ENCODE measurements at regions of chr6 and their contacts with region 1.

Region 1: DNA sequence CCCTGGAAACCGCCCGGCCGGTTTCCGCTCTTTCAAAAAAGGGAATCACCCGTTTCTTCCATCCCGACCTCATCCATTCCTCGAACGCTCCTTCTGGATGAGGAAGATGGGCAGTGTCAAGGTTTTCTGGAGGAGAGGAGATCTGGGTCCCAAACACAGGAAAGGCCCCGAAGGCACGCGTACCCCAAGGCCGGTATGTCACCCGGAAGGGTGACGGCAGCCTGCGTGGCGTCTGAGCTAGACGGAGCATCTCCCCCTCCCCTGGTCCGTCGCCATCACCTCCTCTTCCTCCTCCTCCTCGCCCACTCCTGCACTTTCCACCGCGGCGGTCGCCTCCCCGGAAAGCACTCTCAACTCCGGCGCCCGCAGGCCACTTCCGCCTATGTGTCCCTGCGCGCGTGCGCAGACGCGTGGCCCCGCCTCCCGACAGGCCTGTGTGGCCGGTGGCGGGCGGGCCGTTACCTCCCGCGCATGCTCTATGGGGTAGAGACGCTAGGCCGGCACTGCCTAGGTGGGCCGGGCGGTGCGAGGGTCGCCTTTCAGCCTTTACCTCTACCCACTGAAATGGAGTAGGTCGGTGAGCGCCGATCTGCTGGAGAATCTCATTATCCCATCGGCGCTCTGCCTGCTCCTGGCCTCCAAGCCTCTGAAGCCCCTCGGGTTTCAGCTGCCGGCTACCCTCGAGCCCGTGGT is at the start of gene SLC35B3:
- DNase-seq: peak; percentile 95 to 99 (median 98)
- ATAC-seq: peak; percentile 95
- H3K4me3 ChIP-seq: peak within 1 kb of the TSS; percentile 95
- H3K4me3 Mint-ChIP-seq: peak within 1 kb of the TSS; percentile 96
- H3K27ac ChIP-seq: peak within 1 kb of the TSS; percentile 90 to 94
- H3K27ac Mint-ChIP-seq: peak within 1 kb of the TSS; percentile 97
- H3K4me1 ChIP-seq: peaks cover 8% of the 10 kb centered on the region
- H3K4me1 Mint-ChIP-seq: peaks cover 58% of the 10 kb centered on the region
- H3K27me3 ChIP-seq: no peaks in the 10 kb centered on the region
- H3K27me3 Mint-ChIP-seq: no peaks in the 10 kb centered on the region
- CTCF ChIP-seq: no peak
- total RNA-seq, gene SLC35B3: 2.4 TPM

Region 2: GRCh38 chr6:7312616-7313504 is 1122.4 kb before region 1 on chr6 and contains the start of gene SSR1:
- CTCF ChIA-PET with region 1: no interaction called
- POLR2A ChIA-PET with region 1: no interaction called
- intact Hi-C with region 1: loop called in 1 of 2 experiments (anchors 5 kb)
- DNase-seq: peak; percentile 77 to 96 (median 90)
- ATAC-seq: peak; percentile 95
- H3K4me3 ChIP-seq: peak within 1 kb of the TSS; percentile 94
- H3K4me3 Mint-ChIP-seq: peak within 1 kb of the TSS; percentile 95
- H3K27ac ChIP-seq: peak within 1 kb of the TSS; percentile 74 to 75
- H3K27ac Mint-ChIP-seq: peak within 1 kb of the TSS; percentile 86
- H3K4me1 ChIP-seq: peaks cover 20% of the 10 kb centered on the region
- H3K4me1 Mint-ChIP-seq: peaks cover 53% of the 10 kb centered on the region
- H3K27me3 ChIP-seq: no peaks in the 10 kb centered on the region
- H3K27me3 Mint-ChIP-seq: no peaks in the 10 kb centered on the region
- CTCF ChIP-seq: no peak
- total RNA-seq, gene SSR1: 49.6 to 55.1 TPM

Region 3: GRCh38 chr6:7389451-7390225 is 1045.7 kb before region 1 on chr6 and contains the starts of genes CAGE1 and RIOK1:
- CTCF ChIA-PET with region 1: no interaction called
- POLR2A ChIA-PET with region 1: no interaction called
- intact Hi-C with region 1: loop called in 1 of 2 experiments (anchors 10 kb)
- DNase-seq: peak; percentile 89 to 97 (median 92)
- ATAC-seq: peak; percentile 88
- H3K4me3 ChIP-seq: peak within 1 kb of the TSS; percentile 80
- H3K4me3 Mint-ChIP-seq: peak within 1 kb of the TSS; percentile 93
- H3K27ac ChIP-seq: peak within 1 kb of the TSS; percentile 98 to 99
- H3K27ac Mint-ChIP-seq: peak within 1 kb of the TSS; percentile 98
- H3K4me1 ChIP-seq: peaks cover 28% of the 10 kb centered on the region
- H3K4me1 Mint-ChIP-seq: peaks cover 43% of the 10 kb centered on the region
- H3K27me3 ChIP-seq: no peaks in the 10 kb centered on the region
- H3K27me3 Mint-ChIP-seq: no peaks in the 10 kb centered on the region
- CTCF ChIP-seq: no peak
- total RNA-seq, gene CAGE1: 0.38 to 0.39 TPM
- total RNA-seq, gene RIOK1: 25.5 to 28.1 TPM

Region 4: GRCh38 chr6:7589949-7590917 is 845.1 kb before region 1 on chr6 and contains the start of gene SNRNP48:
- CTCF ChIA-PET with region 1: no interaction called
- POLR2A ChIA-PET with region 1: no interaction called
- intact Hi-C with region 1: loop called in 1 of 2 experiments (anchors 10 kb)
- DNase-seq: peak; percentile 79 to 94 (median 88)
- ATAC-seq: peak; percentile 98
- H3K4me3 ChIP-seq: peak within 1 kb of the TSS; percentile 96
- H3K4me3 Mint-ChIP-seq: peak within 1 kb of the TSS; percentile 100
- H3K27ac ChIP-seq: peak within 1 kb of the TSS; percentile 38 to 45
- H3K27ac Mint-ChIP-seq: peak within 1 kb of the TSS; percentile 91
- H3K4me1 ChIP-seq: peaks cover 15% of the 10 kb centered on the region
- H3K4me1 Mint-ChIP-seq: peaks cover 48% of the 10 kb centered on the region
- H3K27me3 ChIP-seq: no peaks in the 10 kb centered on the region
- H3K27me3 Mint-ChIP-seq: no peaks in the 10 kb centered on the region
- CTCF ChIP-seq: no peak
- total RNA-seq, gene SNRNP48: 12.1 to 13.4 TPM

Region 5: DNA sequence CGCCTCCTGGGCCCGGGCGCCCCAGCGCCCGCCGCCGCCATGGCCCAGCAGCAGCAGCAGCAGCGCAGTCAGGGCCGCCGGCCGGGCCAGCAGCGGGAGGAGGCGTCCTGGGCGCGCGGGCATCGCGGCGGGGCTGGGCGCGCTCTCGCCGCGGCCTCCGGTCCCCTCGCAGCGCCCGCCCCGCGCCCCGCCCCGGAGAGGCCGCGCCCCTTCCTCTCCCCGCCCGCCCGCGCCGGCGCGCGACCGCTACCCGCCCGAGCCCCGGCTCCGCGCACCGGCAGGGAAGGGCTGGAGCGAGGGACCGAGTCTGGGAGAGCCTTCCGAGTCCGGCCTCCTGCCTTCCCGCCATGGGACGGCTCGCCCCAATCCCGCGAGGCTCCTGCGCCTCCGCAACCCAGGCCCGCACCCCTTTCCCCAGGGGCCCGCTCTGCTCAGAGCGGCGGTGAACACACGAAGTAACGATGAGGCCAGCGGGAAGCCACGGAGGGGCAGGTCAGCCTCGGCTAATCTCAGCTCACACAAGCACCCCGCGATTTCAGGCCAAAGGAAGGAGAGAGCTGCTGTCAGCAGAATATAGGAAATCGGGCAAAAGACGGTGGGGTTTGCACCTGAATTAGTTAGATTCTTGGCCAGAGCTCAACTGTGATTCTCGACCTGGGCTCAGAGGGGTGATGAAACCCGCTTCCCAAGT is 524.5 kb before region 1 on chr6 and contains the start of gene TXNDC5:
- CTCF ChIA-PET with region 1: no interaction called
- POLR2A ChIA-PET with region 1: no interaction called
- intact Hi-C with region 1: loop called in 1 of 2 experiments (anchors 5 kb)
- DNase-seq: peak; percentile 32 to 82 (median 66)
- ATAC-seq: peak; percentile 85
- H3K4me3 ChIP-seq: peak within 1 kb of the TSS; percentile 77
- H3K4me3 Mint-ChIP-seq: peak within 1 kb of the TSS; percentile 84
- H3K27ac ChIP-seq: no peak within 1 kb of the TSS
- H3K27ac Mint-ChIP-seq: no peak within 1 kb of the TSS
- H3K4me1 ChIP-seq: peaks cover 16% of the 10 kb centered on the region
- H3K4me1 Mint-ChIP-seq: no peaks in the 10 kb centered on the region
- H3K27me3 ChIP-seq: peaks cover 0 to 2% of the 10 kb centered on the region in 2 experiments
- H3K27me3 Mint-ChIP-seq: no peaks in the 10 kb centered on the region
- CTCF ChIP-seq: no peak
- total RNA-seq, gene TXNDC5: 4.2 to 7.8 TPM

Region 6: DNA sequence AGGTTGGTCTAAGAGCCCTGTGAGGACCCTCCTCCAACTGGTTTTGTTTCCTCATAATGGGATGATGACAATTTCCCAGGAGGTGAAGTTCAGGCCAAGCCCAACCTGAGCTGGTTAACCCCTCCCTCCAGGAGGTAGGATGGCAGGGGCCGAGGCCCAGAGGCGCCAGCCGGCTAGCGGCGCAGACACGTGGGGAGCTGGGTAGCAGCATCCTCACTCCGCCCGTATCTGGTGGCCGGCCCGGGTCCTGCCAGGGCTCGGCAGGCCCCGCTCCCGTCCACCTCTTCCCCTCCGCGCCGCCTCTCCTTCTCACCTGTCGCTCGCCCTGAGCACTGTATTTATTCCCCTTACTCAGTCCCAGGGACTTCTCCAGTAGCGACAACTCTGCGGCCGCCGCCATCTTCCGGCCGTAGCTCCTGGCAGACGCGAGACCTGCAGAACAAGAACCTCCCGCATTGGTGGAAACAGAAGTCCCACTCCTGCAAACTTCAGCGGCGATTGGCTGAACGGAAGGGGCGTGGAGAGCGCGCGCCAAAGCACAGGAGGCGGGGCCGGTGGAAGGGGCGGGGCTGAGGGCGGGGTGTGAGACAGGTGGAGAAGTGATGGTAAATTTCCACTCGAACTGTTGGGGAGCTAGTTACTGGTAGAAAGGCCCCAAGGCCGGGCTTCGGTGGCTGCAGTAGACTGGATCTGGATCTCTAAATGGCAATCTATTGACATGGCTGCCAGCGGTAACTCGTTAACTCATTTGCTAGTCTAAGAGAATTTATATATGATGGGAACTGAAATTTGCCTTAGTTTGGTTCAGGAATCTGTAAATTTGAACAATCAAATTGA is 333.0 kb before region 1 on chr6 and contains the start of gene EEF1E1:
- CTCF ChIA-PET with region 1: no interaction called
- POLR2A ChIA-PET with region 1: interaction called, 10 read pairs
- intact Hi-C with region 1: loop called in 1 of 2 experiments (anchors 10 kb)
- DNase-seq: peak; percentile 93 to 99 (median 97)
- ATAC-seq: peak; percentile 97
- H3K4me3 ChIP-seq: peak within 1 kb of the TSS; percentile 89
- H3K4me3 Mint-ChIP-seq: peak within 1 kb of the TSS; percentile 96
- H3K27ac ChIP-seq: peak within 1 kb of the TSS; percentile 69 to 73
- H3K27ac Mint-ChIP-seq: peak within 1 kb of the TSS; percentile 81
- H3K4me1 ChIP-seq: peaks cover 20% of the 10 kb centered on the region
- H3K4me1 Mint-ChIP-seq: peaks cover 31% of the 10 kb centered on the region
- H3K27me3 ChIP-seq: no peaks in the 10 kb centered on the region
- H3K27me3 Mint-ChIP-seq: peaks cover 25% of the 10 kb centered on the region
- CTCF ChIP-seq: no peak
- total RNA-seq, gene EEF1E1: 11.2 to 14.7 TPM

Region 7: DNA sequence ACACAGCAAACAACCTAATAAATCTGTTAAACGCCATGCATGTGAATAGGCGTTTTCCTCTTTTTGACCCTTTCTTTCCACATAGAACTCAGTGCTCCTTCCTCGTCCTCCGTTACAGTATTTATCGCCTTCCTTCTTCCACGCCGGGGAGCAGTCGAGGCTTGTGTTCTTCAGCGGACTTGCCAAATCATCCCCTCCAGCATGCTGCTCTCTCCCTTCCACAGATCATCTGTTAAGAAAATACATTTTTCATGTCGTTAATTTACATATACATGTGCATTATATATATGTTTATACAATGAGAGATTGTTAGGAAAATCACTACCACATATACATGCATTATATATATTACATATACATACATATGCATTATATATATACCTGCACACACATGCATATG is 92.9 kb before region 1 on chr6:
- CTCF ChIA-PET with region 1: no interaction called
- POLR2A ChIA-PET with region 1: no interaction called
- intact Hi-C with region 1: no loop called
- DNase-seq: no peak
- ATAC-seq: no peak
- H3K4me3 ChIP-seq: no peak overlapping the region
- H3K4me3 Mint-ChIP-seq: no peak overlapping the region
- H3K27ac ChIP-seq: no peak overlapping the region
- H3K27ac Mint-ChIP-seq: no peak overlapping the region
- H3K4me1 ChIP-seq: no peaks in the 10 kb centered on the region
- H3K4me1 Mint-ChIP-seq: no peaks in the 10 kb centered on the region
- H3K27me3 ChIP-seq: peaks cover 0 to 3% of the 10 kb centered on the region in 2 experiments
- H3K27me3 Mint-ChIP-seq: peaks cover 20% of the 10 kb centered on the region
- CTCF ChIP-seq: no peak

Region 8: DNA sequence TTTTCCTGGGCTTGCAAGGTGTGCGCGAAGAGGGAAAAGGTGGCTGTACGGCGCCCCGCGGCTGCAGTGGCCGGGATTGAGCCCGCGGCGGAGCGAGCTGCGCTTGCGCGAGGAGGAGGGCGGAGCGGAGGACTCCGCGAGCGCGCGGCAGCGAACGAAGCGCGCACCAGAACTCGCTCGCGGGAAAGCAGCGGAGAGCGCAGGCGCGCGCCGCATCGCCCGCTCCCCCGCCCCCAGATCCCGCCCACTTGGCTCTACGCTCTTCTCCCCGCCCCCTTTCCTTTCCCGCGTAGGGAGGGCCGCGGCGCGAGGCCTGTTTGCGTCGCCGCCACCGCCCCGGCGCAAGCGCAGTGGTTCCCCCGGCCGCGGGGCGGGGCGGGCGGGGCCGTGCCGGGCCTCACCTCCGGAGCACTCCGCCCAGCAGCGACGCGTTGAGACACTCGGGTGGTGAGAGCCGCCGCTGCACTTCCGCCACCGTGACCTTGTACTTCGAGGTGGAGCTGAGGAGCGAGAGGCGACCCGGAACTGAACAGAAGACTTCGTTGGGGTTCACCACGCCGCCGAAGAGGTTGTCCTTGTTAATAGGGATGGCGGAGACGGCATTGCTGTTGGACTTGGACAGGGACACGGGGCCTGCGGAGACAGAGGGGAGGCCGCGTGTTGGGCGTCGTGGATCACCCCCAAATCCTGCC is 1968.9 kb after region 1 on chr6:
- CTCF ChIA-PET with region 1: no interaction called
- POLR2A ChIA-PET with region 1: no interaction called
- intact Hi-C with region 1: loop called in 1 of 2 experiments (anchors 5 kb)
- DNase-seq: peak; percentile 59 to 93 (median 74)
- ATAC-seq: peak; percentile 86
- H3K4me3 ChIP-seq: peak overlapping the region; percentile 63
- H3K4me3 Mint-ChIP-seq: peak overlapping the region; percentile 89
- H3K27ac ChIP-seq: peak overlapping the region in 1 of 2 donors; percentile 54
- H3K27ac Mint-ChIP-seq: peak overlapping the region; percentile 59
- H3K4me1 ChIP-seq: peaks cover 16% of the 10 kb centered on the region
- H3K4me1 Mint-ChIP-seq: peaks cover 10% of the 10 kb centered on the region
- H3K27me3 ChIP-seq: peaks cover 36 to 38% of the 10 kb centered on the region in 2 experiments
- H3K27me3 Mint-ChIP-seq: peaks cover 65% of the 10 kb centered on the region
- CTCF ChIP-seq: no peak